ENCODE measurements at regions of chr13 and their contacts with region 1.

Region 1: DNA sequence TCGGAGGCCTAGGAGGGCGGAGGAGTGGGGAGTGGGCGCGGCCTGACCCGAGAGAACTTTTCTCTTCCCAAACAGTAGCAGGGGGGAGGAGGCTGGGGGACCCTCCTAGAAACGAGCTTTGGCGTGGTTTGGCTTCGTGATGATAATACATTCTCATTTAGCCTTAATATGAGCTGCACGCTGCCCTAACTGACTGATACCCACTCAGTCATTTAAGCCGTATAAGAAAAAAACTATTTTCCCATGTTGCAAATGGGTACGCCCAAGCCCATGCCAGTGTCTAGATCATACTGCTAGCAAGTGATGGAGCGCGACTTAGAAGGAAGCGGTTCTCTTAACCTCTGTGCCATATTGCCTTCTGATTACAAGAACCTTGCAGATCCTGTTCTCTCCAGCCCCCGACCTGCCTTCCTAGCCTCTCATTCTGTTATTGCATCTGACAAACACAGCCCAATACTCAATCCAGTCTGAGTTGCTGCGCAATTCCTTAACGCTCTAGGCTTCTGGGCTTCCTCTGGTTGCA is 541 bp downstream of the GPALPP1 start:
- DNase-seq: no peak
- H3K4me3 ChIP-seq: peak overlapping the region; percentile 86
- H3K27me3 ChIP-seq: no peaks in the 10 kb centered on the region
- CTCF ChIP-seq: no peak

Region 2: DNA sequence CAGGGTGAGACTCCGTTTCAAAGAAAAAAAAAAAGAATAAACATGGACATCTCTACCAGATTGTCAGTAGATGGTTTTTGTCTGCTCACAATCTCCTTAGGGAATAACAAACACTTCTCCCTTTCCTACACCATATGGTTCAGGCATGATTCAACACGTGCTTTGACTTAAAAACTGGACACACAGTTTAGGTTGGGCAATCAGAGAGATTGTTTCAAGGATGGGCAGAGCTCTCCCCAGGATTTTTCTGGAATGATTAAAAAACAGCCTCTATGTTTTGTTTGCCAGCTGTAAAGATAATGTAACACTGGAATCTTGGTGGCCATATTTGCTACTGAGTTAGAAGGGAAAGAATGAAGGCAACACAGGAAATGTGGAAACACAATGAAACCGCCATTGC is 263.7 kb before region 1 on chr13:
- CTCF ChIA-PET with region 1: no interaction called
- POLR2A ChIA-PET with region 1: no interaction called
- DNase-seq: peak; percentile 90
- H3K4me3 ChIP-seq: no peak overlapping the region
- H3K27me3 ChIP-seq: no peaks in the 10 kb centered on the region
- CTCF ChIP-seq: no peak

Region 3: DNA sequence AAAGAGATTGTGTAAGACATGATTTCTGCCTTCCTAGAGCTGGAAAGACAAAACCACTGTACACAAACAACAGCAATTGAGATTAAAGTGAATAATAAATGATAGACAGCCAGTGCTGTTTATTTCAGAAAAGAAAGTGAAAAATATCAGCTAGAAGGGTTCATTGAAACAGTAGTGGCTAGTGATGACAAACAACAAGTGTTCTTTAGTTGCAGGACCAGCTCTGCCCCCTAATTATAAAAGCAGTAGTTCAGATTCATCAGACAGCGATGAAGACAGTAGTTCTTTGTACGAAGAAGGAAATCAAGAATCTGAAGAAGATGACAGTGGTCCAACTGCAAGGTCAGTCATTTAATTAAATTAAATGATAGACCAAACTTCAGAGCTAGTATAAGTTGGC is 14.2 kb after region 1 on chr13:
- CTCF ChIA-PET with region 1: no interaction called
- POLR2A ChIA-PET with region 1: no interaction called
- DNase-seq: no peak
- H3K4me3 ChIP-seq: no peak overlapping the region
- H3K27me3 ChIP-seq: no peaks in the 10 kb centered on the region
- CTCF ChIP-seq: no peak

Region 4: GRCh38 chr13:45349438-45349837 is 359.6 kb after region 1 on chr13:
- CTCF ChIA-PET with region 1: no interaction called
- POLR2A ChIA-PET with region 1: interaction called, 11 read pairs
- DNase-seq: no peak
- H3K4me3 ChIP-seq: no peak overlapping the region
- H3K27me3 ChIP-seq: no peaks in the 10 kb centered on the region
- CTCF ChIP-seq: no peak

Measured in BJ (cell line).